GM12878 (cell line): ENCODE measurements at regions of chr12 and their contacts with region 1.

Region 1: DNA sequence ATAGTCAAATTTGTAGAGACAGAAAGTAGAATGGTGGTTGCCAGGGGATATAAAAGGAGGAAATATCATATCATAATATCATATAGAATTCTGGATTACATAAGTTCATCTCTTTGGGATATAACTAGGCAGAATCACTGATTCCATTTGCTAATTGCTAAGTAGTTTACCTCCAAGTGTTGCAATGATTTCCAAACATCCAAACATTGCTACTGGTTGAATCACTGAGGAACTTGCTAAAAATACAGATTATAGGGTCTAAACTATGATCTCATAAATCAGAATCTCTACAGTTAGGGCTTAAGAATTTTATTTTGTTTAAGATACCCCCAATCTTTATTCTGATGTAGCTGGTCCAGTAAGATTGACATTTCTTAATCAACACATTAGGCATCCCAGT is 16.1 kb upstream of the TAS2R42 start:
- DNase-seq: no peak
- ATAC-seq: no peak
- H3K4me3 ChIP-seq: no peak overlapping the region
- H3K27ac ChIP-seq: no peak overlapping the region
- H3K4me1 ChIP-seq: no peaks in the 10 kb centered on the region
- H3K27me3 ChIP-seq: no peaks in the 10 kb centered on the region; a peak in 1 of 4 replicates
- CTCF ChIP-seq: no peak
- EP300 ChIP-seq: no peak
- POLR2A ChIP-seq: no peak
- RAD21 ChIP-seq: no peak

Region 2: GRCh38 chr12:10771132-10771733 is 431.6 kb before region 1 on chr12:
- CTCF ChIA-PET with region 1: interaction called, 30 read pairs
- POLR2A ChIA-PET with region 1: no interaction called
- RAD21 ChIA-PET with region 1: interaction called, 33 read pairs
- SMC1A ChIA-PET with region 1: interaction called, 31 read pairs
- in situ Hi-C with region 1: loop called (anchors 5 kb)
- intact Hi-C with region 1: loop called (anchors 1 kb)
- DNase-seq: no peak
- ATAC-seq: 0 out of 3 replicates have a peak, but pooled peaks have one; percentile 37
- H3K4me3 ChIP-seq: no peak overlapping the region
- H3K27ac ChIP-seq: no peak overlapping the region
- H3K4me1 ChIP-seq: no peaks in the 10 kb centered on the region
- H3K27me3 ChIP-seq: peaks cover 0 to 5% of the 10 kb centered on the region in 2 experiments; a peak in 1 of 4 replicates
- CTCF ChIP-seq: peak; percentile 40 to 66 (median 50); a peak in 5 of 6 replicates
- EP300 ChIP-seq: no peak
- POLR2A ChIP-seq: no peak
- RAD21 ChIP-seq: peak; percentile 77

Region 3: GRCh38 chr12:10779103-10779502 is 423.7 kb before region 1 on chr12:
- CTCF ChIA-PET with region 1: interaction called, 18 read pairs
- POLR2A ChIA-PET with region 1: no interaction called
- RAD21 ChIA-PET with region 1: interaction called, 5 read pairs
- SMC1A ChIA-PET with region 1: interaction called, 12 read pairs
- in situ Hi-C with region 1: loop called (anchors 5 kb)
- intact Hi-C with region 1: no loop called
- DNase-seq: no peak
- ATAC-seq: no peak
- H3K4me3 ChIP-seq: no peak overlapping the region
- H3K27ac ChIP-seq: no peak overlapping the region
- H3K4me1 ChIP-seq: no peaks in the 10 kb centered on the region
- H3K27me3 ChIP-seq: no peaks in the 10 kb centered on the region
- CTCF ChIP-seq: no peak
- EP300 ChIP-seq: no peak
- POLR2A ChIP-seq: no peak
- RAD21 ChIP-seq: no peak

Region 4: DNA sequence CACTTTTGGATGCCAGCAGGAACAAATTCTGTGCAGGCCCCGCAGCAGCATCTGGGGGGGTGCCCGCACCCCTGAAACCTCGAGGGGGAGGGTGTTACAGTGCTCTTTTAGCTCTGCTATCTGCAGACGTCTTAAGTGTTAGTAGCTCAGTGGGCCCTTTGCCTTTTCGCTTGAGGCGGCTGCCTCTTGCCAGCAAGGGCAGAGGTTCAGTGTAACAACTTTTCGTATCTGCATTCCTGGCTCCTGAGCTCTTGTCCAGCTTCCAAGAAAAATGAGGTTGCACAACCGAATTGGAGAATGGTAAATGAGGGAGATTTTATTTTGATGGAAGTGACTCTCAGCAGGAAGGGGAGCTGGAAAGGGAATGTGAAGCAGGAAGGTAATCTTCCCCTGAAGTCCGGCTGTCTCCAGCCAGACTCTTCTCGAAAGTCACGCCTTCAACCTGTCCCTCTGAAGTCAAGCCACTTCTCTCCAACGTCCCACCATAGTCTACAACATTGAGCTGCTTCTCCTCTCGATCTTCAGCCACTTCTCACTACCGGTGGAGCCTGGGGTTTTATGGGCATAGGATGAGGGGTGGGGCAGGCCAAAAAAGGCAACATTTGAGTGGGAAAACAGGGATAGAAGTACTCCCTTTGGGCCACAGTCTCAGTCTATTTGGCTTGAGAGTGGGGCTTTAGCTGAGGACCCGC is 233.9 kb before region 1 on chr12:
- CTCF ChIA-PET with region 1: interaction called, 4 read pairs
- POLR2A ChIA-PET with region 1: no interaction called
- RAD21 ChIA-PET with region 1: no interaction called
- SMC1A ChIA-PET with region 1: no interaction called
- in situ Hi-C with region 1: no loop called
- intact Hi-C with region 1: loop called (anchors 10 kb)
- DNase-seq: no peak
- ATAC-seq: no peak
- H3K4me3 ChIP-seq: no peak overlapping the region
- H3K27ac ChIP-seq: no peak overlapping the region
- H3K4me1 ChIP-seq: no peaks in the 10 kb centered on the region
- H3K27me3 ChIP-seq: no peaks in the 10 kb centered on the region
- CTCF ChIP-seq: no peak
- EP300 ChIP-seq: no peak
- POLR2A ChIP-seq: no peak
- RAD21 ChIP-seq: no peak

Region 5: GRCh38 chr12:11186837-11187236 is 16.0 kb before region 1 on chr12 and contains the start of gene TAS2R42:
- CTCF ChIA-PET with region 1: interaction called, 12 read pairs
- POLR2A ChIA-PET with region 1: no interaction called
- RAD21 ChIA-PET with region 1: interaction called, 4 read pairs
- SMC1A ChIA-PET with region 1: interaction called, 4 read pairs
- in situ Hi-C with region 1: no loop called
- intact Hi-C with region 1: no loop called
- DNase-seq: no peak
- ATAC-seq: no peak
- H3K4me3 ChIP-seq: no peak within 1 kb of the TSS
- H3K27ac ChIP-seq: no peak within 1 kb of the TSS
- H3K4me1 ChIP-seq: no peaks in the 10 kb centered on the region
- H3K27me3 ChIP-seq: no peaks in the 10 kb centered on the region
- CTCF ChIP-seq: no peak
- EP300 ChIP-seq: no peak
- POLR2A ChIP-seq: no peak
- RAD21 ChIP-seq: no peak
- polyA plus RNA-seq, gene TAS2R42: not detected

Region 6: DNA sequence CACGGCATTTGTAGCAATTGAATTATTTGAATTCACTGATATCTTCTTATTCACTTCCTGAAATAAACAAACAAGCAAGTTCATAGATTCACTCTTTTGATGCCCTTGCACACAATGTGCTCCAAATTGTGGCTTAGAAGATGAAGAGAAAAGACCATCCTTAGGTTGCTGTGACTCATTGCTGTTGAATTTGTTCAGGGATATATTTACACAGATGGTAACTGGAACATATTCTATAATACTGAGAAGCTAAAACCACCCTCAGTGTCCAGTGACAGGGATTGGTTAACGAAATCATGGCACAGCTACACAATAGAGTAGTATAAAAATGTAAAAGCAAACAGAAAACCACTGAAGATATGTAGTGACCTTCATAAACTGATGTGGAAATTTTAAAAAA is 104.3 kb after region 1 on chr12:
- CTCF ChIA-PET with region 1: no interaction called
- POLR2A ChIA-PET with region 1: no interaction called
- RAD21 ChIA-PET with region 1: no interaction called
- SMC1A ChIA-PET with region 1: no interaction called
- in situ Hi-C with region 1: no loop called
- intact Hi-C with region 1: no loop called
- DNase-seq: no peak
- ATAC-seq: no peak
- H3K4me3 ChIP-seq: no peak overlapping the region
- H3K27ac ChIP-seq: no peak overlapping the region
- H3K4me1 ChIP-seq: no peaks in the 10 kb centered on the region
- H3K27me3 ChIP-seq: no peaks in the 10 kb centered on the region
- CTCF ChIP-seq: no peak
- EP300 ChIP-seq: no peak
- POLR2A ChIP-seq: no peak
- RAD21 ChIP-seq: no peak